CD8-positive, alpha-beta T cell (primary cell): ENCODE measurements at regions of chr9 and their contacts with region 1.

Region 1: GRCh38 chr9:34376596-34377403 is at the start of gene MYORG:
- DNase-seq: peak; percentile 93 to 98 (median 95)
- ATAC-seq: peak; percentile 73
- H3K4me3 ChIP-seq: peak within 1 kb of the TSS; percentile 77 to 82
- H3K4me3 Mint-ChIP-seq: peak within 1 kb of the TSS; percentile 93
- H3K27ac ChIP-seq: peak within 1 kb of the TSS; percentile 9 to 55
- H3K27ac Mint-ChIP-seq: peak within 1 kb of the TSS; percentile 89
- H3K4me1 ChIP-seq: peaks cover 36% of the 10 kb centered on the region
- H3K4me1 Mint-ChIP-seq: peaks cover 47% of the 10 kb centered on the region
- H3K27me3 ChIP-seq: no peaks in the 10 kb centered on the region
- H3K27me3 Mint-ChIP-seq: no peaks in the 10 kb centered on the region
- CTCF ChIP-seq: no peak
- total RNA-seq, gene MYORG: 0.39 to 0.60 TPM

Region 2: DNA sequence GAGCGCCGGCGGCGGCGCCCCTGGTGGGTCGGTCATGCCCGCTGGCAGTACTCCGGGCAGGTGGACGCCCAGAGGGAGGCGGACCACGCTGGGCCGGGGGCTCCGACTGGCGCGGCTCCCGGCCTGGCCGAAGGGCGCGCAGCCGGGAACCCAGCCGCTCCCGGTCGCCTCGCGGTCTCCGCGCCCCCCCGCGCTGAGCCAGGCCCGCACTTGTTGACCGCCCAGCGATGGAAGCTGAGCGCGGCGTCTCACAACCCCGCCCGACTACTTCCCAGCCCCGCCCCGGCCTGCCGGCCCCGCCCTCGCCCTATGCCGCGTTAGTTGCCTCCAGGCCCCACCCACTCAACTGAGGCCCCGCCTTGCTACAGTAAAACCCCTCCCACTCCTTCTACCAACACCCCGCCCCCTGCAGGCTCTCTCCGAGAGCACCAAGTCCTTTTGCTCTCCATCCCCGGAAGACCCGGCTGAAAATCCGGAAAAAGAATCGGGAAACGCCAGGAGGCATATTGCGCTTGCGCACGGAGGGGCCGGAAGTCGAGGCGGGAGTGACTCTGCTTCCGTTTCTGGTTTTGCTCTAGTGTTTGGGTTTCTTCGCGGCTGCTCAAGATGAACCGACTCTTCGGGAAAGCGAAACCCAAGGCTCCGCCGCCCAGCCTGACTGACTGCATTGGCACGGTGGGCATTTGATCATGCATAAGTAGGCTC is 1112.2 kb before region 1 on chr9 and contains the starts of genes BAG1 and CHMP5:
- CTCF ChIA-PET with region 1: no interaction called
- POLR2A ChIA-PET with region 1: no interaction called
- intact Hi-C with region 1: loop called in 1 of 2 experiments (anchors 10 kb)
- DNase-seq: peak; percentile 99 to 100 (median 100)
- ATAC-seq: peak; percentile 97
- H3K4me3 ChIP-seq: peak within 1 kb of the TSS; percentile 69 to 98
- H3K4me3 Mint-ChIP-seq: peak within 1 kb of the TSS; percentile 96
- H3K27ac ChIP-seq: peak within 1 kb of the TSS; percentile 74 to 94
- H3K27ac Mint-ChIP-seq: peak within 1 kb of the TSS; percentile 97
- H3K4me1 ChIP-seq: peaks cover 21% of the 10 kb centered on the region
- H3K4me1 Mint-ChIP-seq: peaks cover 62% of the 10 kb centered on the region
- H3K27me3 ChIP-seq: no peaks in the 10 kb centered on the region
- H3K27me3 Mint-ChIP-seq: no peaks in the 10 kb centered on the region
- CTCF ChIP-seq: no peak
- total RNA-seq, gene BAG1: 56.8 to 64.3 TPM
- total RNA-seq, gene CHMP5: 13.4 to 14.2 TPM

Region 3: DNA sequence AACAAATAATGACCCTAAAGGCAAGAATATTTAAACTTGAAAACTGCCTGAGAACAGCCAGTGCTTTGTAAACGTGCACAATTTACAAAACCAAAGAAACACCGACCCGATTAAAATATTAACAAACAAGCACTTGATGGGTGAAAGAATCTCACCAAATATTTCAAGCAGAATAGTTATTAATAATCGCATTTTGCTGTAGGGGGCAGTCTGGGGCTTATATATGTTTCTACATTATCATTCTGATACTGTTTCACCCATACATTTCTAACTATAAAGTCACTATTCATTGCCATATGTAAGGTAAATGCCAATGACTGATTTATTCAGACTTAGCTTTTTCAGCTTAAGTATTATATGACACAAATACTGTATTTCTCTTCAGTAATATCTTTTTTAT is 365.8 kb before region 1 on chr9:
- CTCF ChIA-PET with region 1: no interaction called
- POLR2A ChIA-PET with region 1: no interaction called
- intact Hi-C with region 1: loop called in 1 of 2 experiments (anchors 1 kb)
- DNase-seq: peak in 3 of 9 experiments; percentile 17 to 51 (median 34)
- ATAC-seq: peak; percentile 42
- H3K4me3 ChIP-seq: no peak overlapping the region
- H3K4me3 Mint-ChIP-seq: no peak overlapping the region
- H3K27ac ChIP-seq: no peak overlapping the region
- H3K27ac Mint-ChIP-seq: no peak overlapping the region
- H3K4me1 ChIP-seq: no peaks in the 10 kb centered on the region
- H3K4me1 Mint-ChIP-seq: no peaks in the 10 kb centered on the region
- H3K27me3 ChIP-seq: no peaks in the 10 kb centered on the region
- H3K27me3 Mint-ChIP-seq: no peaks in the 10 kb centered on the region
- CTCF ChIP-seq: peak; percentile 64

Region 4: DNA sequence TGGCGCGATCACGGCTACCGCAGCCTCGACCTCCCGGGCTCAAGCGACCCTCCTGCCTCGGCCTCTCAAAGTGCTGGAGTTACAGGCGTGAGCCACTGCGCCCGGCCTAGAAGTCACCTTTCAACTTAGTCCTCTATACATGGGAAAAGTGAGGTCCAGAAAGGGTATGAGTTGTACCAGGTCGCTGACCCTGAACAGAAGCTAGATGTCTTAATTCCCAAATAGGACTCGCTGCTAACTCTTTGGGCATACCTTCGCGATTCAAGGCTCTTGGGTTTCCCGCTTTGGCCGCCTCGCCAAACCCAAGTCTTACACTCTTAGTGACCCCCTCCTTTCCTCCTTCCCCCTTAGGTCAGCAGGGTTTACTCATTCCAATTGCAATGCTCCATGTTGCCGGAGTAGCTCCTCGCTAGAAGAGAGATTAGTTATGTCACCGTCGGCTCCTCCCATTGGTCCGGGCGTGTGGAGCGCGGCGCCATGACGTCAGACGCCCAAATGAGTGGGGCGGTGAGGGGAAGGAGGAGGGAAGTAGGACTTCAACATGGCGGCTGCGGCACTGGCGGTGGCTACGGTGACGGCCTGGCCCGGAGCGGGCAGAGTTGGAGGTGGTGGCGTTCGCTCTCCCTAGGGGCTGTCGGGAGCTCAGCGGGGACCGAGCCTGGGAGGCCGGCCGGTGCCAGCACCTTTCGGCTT is 198.1 kb before region 1 on chr9 and contains the start of gene UBAP1:
- CTCF ChIA-PET with region 1: no interaction called
- POLR2A ChIA-PET with region 1: no interaction called
- intact Hi-C with region 1: loop called (anchors 2 to 5 kb)
- DNase-seq: peak; percentile 89 to 98 (median 95)
- ATAC-seq: peak; percentile 98
- H3K4me3 ChIP-seq: peak within 1 kb of the TSS; percentile 88 to 93
- H3K4me3 Mint-ChIP-seq: peak within 1 kb of the TSS; percentile 97
- H3K27ac ChIP-seq: peak within 1 kb of the TSS; percentile 92 to 96
- H3K27ac Mint-ChIP-seq: peak within 1 kb of the TSS; percentile 98
- H3K4me1 ChIP-seq: peaks cover 9% of the 10 kb centered on the region
- H3K4me1 Mint-ChIP-seq: peaks cover 24% of the 10 kb centered on the region
- H3K27me3 ChIP-seq: no peaks in the 10 kb centered on the region
- H3K27me3 Mint-ChIP-seq: no peaks in the 10 kb centered on the region
- CTCF ChIP-seq: no peak
- total RNA-seq, gene UBAP1: 70.9 to 73.2 TPM

Region 5: DNA sequence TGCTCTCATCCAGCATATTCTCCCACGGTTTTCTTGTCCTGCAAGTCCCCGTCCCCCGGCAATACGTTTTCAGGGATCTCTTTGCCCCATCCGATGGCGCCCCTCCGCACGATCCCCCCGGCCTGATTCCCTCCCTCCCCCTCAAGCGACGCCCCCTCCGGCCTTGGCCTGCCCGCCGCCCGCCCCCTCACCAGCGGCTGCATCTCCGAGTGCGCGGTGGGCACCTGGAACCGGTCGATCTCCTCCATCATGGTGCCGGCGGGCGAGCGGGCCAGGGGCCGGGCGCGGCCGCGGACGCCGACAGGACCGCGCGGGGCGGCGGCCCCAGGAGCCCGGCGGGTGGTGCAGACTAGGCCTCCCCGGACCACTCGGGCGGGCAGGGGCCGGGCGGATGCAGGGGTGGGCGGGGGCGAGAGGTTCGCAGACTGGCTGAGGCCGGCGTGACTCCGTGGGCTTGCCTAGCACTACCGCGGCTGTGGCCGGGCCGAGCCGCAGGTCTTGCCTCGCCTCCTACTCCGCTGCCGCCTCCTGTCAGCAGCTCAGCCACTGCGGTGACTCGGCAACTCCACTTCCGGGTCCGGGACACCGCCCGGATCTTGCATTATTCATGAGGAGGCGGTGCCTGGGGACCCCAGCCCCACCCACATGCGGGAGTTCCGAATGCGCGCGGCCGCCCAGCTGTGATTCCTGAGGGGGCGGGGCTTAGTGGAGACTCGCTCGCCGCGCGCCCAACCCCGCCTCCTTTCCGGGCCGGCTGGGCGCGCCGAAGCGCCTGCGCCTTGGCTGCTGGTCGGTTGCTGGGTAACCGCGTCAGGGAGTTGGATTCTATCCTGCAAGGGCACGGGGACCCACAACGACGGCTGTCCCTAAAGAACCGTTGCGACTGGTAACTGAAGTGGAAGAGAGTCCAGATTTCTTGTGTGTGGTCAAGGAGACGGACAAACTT is 81.5 kb after region 1 on chr9 and contains the starts of genes DNAI1 and FAM219A:
- CTCF ChIA-PET with region 1: no interaction called
- POLR2A ChIA-PET with region 1: interaction called, 5 read pairs
- intact Hi-C with region 1: loop called (anchors 1 kb)
- DNase-seq: peak; percentile 98 to 99 (median 99)
- ATAC-seq: peak; percentile 96
- H3K4me3 ChIP-seq: peak within 1 kb of the TSS; percentile 61 to 67
- H3K4me3 Mint-ChIP-seq: peak within 1 kb of the TSS; percentile 91
- H3K27ac ChIP-seq: peak within 1 kb of the TSS in 1 of 2 experiments; percentile 29
- H3K27ac Mint-ChIP-seq: peak within 1 kb of the TSS; percentile 46
- H3K4me1 ChIP-seq: peaks cover 14% of the 10 kb centered on the region
- H3K4me1 Mint-ChIP-seq: peaks cover 30% of the 10 kb centered on the region
- H3K27me3 ChIP-seq: no peaks in the 10 kb centered on the region
- H3K27me3 Mint-ChIP-seq: no peaks in the 10 kb centered on the region
- CTCF ChIP-seq: no peak
- total RNA-seq, gene DNAI1: not detected
- total RNA-seq, gene FAM219A: 5.5 to 5.9 TPM

Region 6: GRCh38 chr9:34570376-34570775 is 193.6 kb after region 1 on chr9:
- CTCF ChIA-PET with region 1: no interaction called
- POLR2A ChIA-PET with region 1: no interaction called
- intact Hi-C with region 1: no loop called
- DNase-seq: no peak
- ATAC-seq: no peak
- H3K4me3 ChIP-seq: no peak overlapping the region
- H3K4me3 Mint-ChIP-seq: no peak overlapping the region
- H3K27ac ChIP-seq: no peak overlapping the region
- H3K27ac Mint-ChIP-seq: no peak overlapping the region
- H3K4me1 ChIP-seq: no peaks in the 10 kb centered on the region
- H3K4me1 Mint-ChIP-seq: no peaks in the 10 kb centered on the region
- H3K27me3 ChIP-seq: peaks cover 0 to 3% of the 10 kb centered on the region in 2 experiments
- H3K27me3 Mint-ChIP-seq: peaks cover 45% of the 10 kb centered on the region
- CTCF ChIP-seq: no peak

Region 7: DNA sequence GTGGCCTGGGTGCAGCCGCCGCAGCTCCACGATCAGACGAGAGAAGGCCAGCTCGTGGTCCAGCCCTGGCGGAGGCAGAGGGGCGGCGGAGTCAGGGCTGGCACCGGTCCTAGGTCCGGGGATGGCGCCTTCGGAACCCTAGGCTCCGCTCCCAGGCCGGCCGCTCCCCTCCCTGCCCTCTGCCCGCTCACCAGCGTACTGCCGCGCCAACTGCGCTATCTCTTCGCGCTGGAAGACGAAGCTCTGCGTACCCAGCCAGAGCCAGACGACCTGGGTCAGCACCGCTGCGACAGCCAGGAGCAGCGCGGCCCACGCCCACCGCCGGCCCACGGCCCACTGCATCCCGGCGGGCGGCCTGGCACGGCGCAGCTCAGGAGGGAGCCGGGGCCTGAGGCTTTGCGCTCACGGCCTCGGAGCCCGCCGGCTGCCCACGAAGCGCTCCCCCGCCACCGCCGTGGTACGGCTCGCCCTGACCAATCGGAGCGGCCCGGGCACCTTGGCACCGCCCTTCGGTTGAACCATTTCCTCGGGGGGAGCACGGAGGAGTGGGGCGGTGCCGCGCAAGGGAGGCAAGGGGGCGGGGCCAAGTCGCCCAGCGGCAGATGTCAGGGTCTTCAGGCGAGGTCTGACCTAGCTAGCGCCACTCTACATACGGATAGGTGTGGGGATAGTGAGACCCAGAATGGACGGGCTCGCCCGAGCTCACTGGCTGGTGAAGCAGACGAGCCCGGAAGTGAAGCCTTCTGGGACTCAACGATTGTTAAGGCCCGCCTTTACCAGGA is 260.7 kb after region 1 on chr9 and contains the start of gene SIGMAR1:
- CTCF ChIA-PET with region 1: no interaction called
- POLR2A ChIA-PET with region 1: interaction called, 5 read pairs
- intact Hi-C with region 1: loop called in 1 of 2 experiments (anchors 1 kb)
- DNase-seq: peak; percentile 85 to 96 (median 93)
- ATAC-seq: peak; percentile 95
- H3K4me3 ChIP-seq: peak within 1 kb of the TSS; percentile 63 to 69
- H3K4me3 Mint-ChIP-seq: peak within 1 kb of the TSS; percentile 86
- H3K27ac ChIP-seq: peak within 1 kb of the TSS; percentile 55 to 86
- H3K27ac Mint-ChIP-seq: peak within 1 kb of the TSS; percentile 86
- H3K4me1 ChIP-seq: peaks cover 15% of the 10 kb centered on the region
- H3K4me1 Mint-ChIP-seq: peaks cover 36% of the 10 kb centered on the region
- H3K27me3 ChIP-seq: no peaks in the 10 kb centered on the region
- H3K27me3 Mint-ChIP-seq: no peaks in the 10 kb centered on the region
- CTCF ChIP-seq: no peak
- total RNA-seq, gene SIGMAR1: 8.5 to 9.6 TPM

Region 8: DNA sequence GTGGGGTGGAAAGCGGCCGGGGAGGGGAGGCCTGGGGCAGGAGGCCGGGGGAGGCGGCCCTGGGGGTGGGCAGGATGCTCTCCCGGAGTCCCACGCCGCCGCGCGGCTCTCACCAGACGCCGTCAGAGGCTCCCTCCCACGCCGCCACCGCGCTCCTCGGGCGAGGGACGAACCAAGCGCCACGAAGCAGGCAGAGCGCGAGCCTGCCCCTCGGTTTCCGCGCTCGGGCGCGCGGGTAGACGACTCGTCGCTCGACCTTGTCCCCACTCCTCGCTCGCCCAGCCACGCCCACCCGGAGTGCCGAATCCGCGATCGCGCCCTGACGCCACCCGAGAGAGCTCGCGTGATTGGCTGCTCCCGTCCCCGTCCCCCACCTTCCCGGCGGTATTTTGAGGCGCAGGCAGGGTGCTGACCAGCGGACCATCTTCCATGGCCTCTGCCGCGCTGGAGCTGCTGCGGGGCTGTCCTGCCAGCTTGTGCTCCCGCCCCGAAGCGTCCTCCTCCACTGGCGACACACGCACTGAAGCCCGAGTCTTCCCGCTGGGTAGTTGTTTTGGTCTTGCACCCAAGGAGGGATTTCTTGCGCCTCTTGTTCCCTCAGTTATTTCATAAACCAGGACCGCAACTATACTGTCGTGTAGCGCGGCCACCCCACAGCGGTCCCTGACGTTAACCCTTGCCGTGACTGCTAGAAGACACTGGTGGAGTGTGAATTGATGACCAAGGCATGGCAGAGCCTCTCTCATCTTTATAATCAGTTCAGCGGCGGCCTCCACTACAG is 1881.6 kb after region 1 on chr9 and contains the start of gene GNE:
- CTCF ChIA-PET with region 1: no interaction called
- POLR2A ChIA-PET with region 1: no interaction called
- intact Hi-C with region 1: loop called in 1 of 2 experiments (anchors 5 kb)
- DNase-seq: peak; percentile 95 to 99 (median 98)
- ATAC-seq: peak; percentile 89
- H3K4me3 ChIP-seq: peak within 1 kb of the TSS; percentile 85 to 100
- H3K4me3 Mint-ChIP-seq: peak within 1 kb of the TSS; percentile 98
- H3K27ac ChIP-seq: peak within 1 kb of the TSS; percentile 90 to 91
- H3K27ac Mint-ChIP-seq: peak within 1 kb of the TSS; percentile 97
- H3K4me1 ChIP-seq: peaks cover 17% of the 10 kb centered on the region
- H3K4me1 Mint-ChIP-seq: peaks cover 16% of the 10 kb centered on the region
- H3K27me3 ChIP-seq: no peaks in the 10 kb centered on the region
- H3K27me3 Mint-ChIP-seq: no peaks in the 10 kb centered on the region
- CTCF ChIP-seq: no peak
- total RNA-seq, gene GNE: 17.3 to 17.4 TPM